Heart right ventricle (tissue), 16 donors: ENCODE measurements at regions of chr22 and their contacts with region 1.

Region 1: GRCh38 chr22:23970816-23971486 is 3.3 kb downstream of the DDT start:
- DNase-seq: no peak
- ATAC-seq: no peak
- H3K4me3 ChIP-seq: no peak overlapping the region
- H3K27ac ChIP-seq: no peak overlapping the region
- H3K4me1 ChIP-seq: peaks cover 0 to 23% (median 0%) of the 10 kb centered on the region in 9 donors
- H3K27me3 ChIP-seq: no peaks in the 10 kb centered on the region
- CTCF ChIP-seq: no peak

Region 2: GRCh38 chr22:23922651-23923320 is 48.2 kb before region 1 on chr22:
- intact Hi-C with region 1: loop called in 5 of 10 experiments (anchors 5 to 10 kb)
- DNase-seq: no peak
- ATAC-seq: no peak
- H3K4me3 ChIP-seq: no peak overlapping the region
- H3K27ac ChIP-seq: no peak overlapping the region
- H3K4me1 ChIP-seq: no peaks in the 10 kb centered on the region
- H3K27me3 ChIP-seq: no peaks in the 10 kb centered on the region
- CTCF ChIP-seq: no peak